Activated CD4-positive, alpha-beta memory T cell treated with anti-CD3 and anti-CD28 coated beads, Interleukin-2, amount 10 ng/mL, durations not matched to agents 7 days and 5 days (primary cell): ENCODE measurements at regions of chr4 and their contacts with region 1.

Region 1: DNA sequence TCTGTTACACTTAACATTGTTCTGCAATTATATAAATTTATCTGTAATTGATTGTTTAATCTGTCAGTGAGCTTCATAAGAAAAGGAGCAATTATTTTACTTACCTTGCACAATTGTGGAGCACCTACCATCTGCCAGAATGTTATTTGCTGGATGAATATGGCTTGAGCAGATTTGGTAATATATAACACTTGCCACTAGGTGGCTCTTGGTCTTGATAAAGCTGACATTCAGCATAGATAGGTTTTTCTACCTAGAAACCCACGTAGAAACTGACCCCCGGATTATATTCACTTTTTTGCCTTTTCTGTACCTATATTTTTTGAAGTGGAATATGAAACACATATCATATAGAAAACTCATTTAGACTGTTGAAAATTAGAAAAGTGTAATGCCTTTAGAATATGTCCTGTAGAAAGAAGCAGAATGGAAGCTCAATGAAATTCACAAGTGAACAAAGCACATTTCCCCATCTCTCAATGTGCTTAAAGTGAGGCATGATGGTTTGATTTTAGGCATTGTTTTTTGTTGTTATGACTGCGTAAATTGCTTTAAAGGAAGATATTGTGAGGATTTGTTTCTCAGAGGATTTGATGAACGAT is 9.5 kb downstream of the RBPJ start:
- DNase-seq: no peak
- H3K4me3 Mint-ChIP-seq: no peak overlapping the region
- H3K27ac Mint-ChIP-seq: no peak overlapping the region
- H3K4me1 Mint-ChIP-seq: peaks cover 56% of the 10 kb centered on the region
- H3K27me3 Mint-ChIP-seq: no peaks in the 10 kb centered on the region

Region 2: DNA sequence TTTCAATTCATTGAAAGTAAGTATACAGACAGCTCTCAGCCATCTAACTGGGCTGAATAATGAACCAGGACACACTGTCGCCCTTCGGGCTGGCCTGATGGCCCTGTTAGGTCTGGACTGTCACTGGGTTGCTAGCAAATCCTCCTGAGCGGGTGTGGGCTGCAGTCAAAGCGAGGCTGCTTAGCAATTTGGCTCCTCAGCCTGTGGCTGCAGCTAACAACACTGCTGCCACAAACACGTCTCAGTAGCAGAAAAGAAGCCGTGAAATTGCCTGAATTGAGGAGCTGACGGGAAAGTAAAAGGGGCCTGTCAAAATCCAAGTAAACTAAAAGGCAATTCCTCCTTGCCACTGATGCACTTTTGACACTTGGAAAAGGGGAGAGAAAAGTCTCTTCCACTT is 343.5 kb before region 1 on chr4:
- CTCF ChIA-PET with region 1: interaction called, 39 read pairs
- POLR2A ChIA-PET with region 1: no interaction called
- DNase-seq: no peak
- H3K4me3 Mint-ChIP-seq: no peak overlapping the region
- H3K27ac Mint-ChIP-seq: no peak overlapping the region
- H3K4me1 Mint-ChIP-seq: peaks cover 16% of the 10 kb centered on the region
- H3K27me3 Mint-ChIP-seq: no peaks in the 10 kb centered on the region

Region 3: GRCh38 chr4:26319467-26319948 is 10.8 kb before region 1 on chr4:
- CTCF ChIA-PET with region 1: interaction called, 10 read pairs
- POLR2A ChIA-PET with region 1: interaction called, 11 read pairs
- DNase-seq: peak; percentile 99
- H3K4me3 Mint-ChIP-seq: peak overlapping the region; percentile 99
- H3K27ac Mint-ChIP-seq: peak overlapping the region; percentile 99
- H3K4me1 Mint-ChIP-seq: peaks cover 36% of the 10 kb centered on the region
- H3K27me3 Mint-ChIP-seq: no peaks in the 10 kb centered on the region

Region 4: GRCh38 chr4:26349496-26349895 is 19.2 kb after region 1 on chr4:
- CTCF ChIA-PET with region 1: interaction called, 18 read pairs
- POLR2A ChIA-PET with region 1: no interaction called
- DNase-seq: no peak
- H3K4me3 Mint-ChIP-seq: no peak overlapping the region
- H3K27ac Mint-ChIP-seq: no peak overlapping the region
- H3K4me1 Mint-ChIP-seq: peaks cover 59% of the 10 kb centered on the region
- H3K27me3 Mint-ChIP-seq: no peaks in the 10 kb centered on the region

Region 5: GRCh38 chr4:26397086-26397485 is 66.8 kb after region 1 on chr4:
- CTCF ChIA-PET with region 1: interaction called, 13 read pairs
- POLR2A ChIA-PET with region 1: interaction called, 3 read pairs
- DNase-seq: no peak
- H3K4me3 Mint-ChIP-seq: no peak overlapping the region
- H3K27ac Mint-ChIP-seq: no peak overlapping the region
- H3K4me1 Mint-ChIP-seq: peaks cover 32% of the 10 kb centered on the region
- H3K27me3 Mint-ChIP-seq: no peaks in the 10 kb centered on the region